Aorta (tissue), 5 donors: ENCODE measurements at regions of chr6 and their contacts with region 1.

Region 1: GRCh38 chr6:29649701-29650673 is 6.9 kb upstream of the MOG start:
- DNase-seq: peak; percentile 99
- ATAC-seq: peak; percentile 97
- H3K4me3 ChIP-seq: peak overlapping the region; percentile 59 to 97
- H3K27ac ChIP-seq: peak overlapping the region; percentile 94 to 100
- H3K4me1 ChIP-seq: no peaks in the 10 kb centered on the region
- H3K27me3 ChIP-seq: no peaks in the 10 kb centered on the region

Region 2: DNA sequence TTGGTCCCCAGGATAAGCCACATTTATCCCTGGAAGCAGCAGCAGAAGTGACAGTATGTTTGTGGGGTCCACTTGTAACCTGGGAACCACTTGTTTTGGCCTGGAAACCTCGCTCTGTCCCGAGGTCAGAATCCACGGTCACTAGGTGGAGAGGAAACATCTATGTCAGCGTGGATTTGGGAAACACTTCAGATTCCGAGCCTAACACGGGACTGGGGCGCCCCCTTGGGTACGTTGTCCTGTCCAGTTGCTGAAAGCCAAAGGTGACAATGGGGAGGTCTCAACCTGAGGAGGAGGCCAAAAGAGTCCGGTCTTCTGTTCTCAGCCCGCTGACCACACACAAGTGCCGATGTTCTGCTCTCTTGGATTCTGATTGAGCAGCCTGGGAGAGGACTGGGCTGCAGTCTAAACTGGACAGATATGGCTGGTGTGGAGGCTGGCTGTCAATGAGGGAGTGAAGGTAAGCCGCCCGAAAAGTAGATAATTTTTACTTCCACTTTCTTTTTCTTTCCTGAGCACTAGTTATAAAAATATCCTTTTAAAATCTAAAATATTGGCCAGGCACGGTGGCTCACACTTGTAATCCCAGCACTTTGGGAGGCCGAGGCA is 35.8 kb after region 1 on chr6:
- intact Hi-C with region 1: loop called in 1 of 2 experiments (anchors 5 kb)
- DNase-seq: peak; percentile 51 to 81
- ATAC-seq: peak; percentile 46
- H3K4me3 ChIP-seq: no peak overlapping the region
- H3K27ac ChIP-seq: no peak overlapping the region
- H3K4me1 ChIP-seq: no peaks in the 10 kb centered on the region
- H3K27me3 ChIP-seq: no peaks in the 10 kb centered on the region

Region 3: GRCh38 chr6:29696155-29697125 is 46.5 kb after region 1 on chr6:
- intact Hi-C with region 1: loop called in 1 of 2 experiments (anchors 5 kb)
- DNase-seq: no peak
- ATAC-seq: no peak
- H3K4me3 ChIP-seq: no peak overlapping the region
- H3K27ac ChIP-seq: no peak overlapping the region
- H3K4me1 ChIP-seq: no peaks in the 10 kb centered on the region
- H3K27me3 ChIP-seq: no peaks in the 10 kb centered on the region

Region 4: DNA sequence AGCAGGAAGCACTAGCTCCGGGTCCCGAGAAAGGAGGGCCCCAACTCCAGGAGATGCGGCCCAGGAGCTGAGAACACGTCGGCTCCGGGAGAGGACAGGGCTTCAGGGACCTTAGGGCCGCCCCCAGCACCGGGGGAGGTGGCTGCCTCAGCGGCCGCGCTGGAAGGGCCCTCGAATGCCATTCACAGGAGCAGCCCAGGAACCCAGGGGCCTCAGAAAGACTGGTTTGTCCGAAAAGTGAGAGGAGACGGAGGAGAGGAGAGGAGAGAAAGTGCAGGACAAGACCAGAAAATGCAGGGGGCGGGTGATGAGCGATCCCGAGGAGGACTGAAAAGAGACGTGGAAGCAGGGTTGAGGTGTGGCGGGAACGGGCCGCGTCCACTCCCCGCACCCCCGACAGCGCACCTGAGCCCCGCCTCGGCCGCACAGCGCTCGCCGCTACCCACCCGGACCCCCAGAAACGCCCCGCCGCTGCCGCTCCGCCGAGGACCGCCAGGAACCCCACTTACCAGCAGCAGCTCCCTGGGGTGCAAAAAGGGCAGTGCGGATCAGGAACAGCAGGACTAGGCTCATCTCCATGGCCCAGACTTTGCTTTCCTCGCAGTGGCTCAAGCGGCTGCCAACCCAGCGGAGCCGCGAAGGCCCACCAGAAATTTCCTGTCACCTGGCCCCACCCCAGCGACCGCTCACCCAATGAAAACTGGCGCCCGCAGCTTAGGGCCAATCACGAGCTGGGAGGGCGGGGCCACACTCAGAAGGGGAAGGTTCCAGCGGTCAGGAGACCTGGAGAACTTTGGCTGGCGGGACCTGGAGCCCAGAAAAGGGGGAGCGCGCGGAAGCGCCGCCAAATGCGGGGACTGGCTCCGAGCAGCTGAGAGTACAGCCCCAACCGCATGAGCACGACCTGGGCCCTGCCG is 98.7 kb after region 1 on chr6:
- intact Hi-C with region 1: loop called in 1 of 2 experiments (anchors 5 kb)
- DNase-seq: peak; percentile 97
- ATAC-seq: peak; percentile 90
- H3K4me3 ChIP-seq: peak overlapping the region; percentile 52
- H3K27ac ChIP-seq: peak overlapping the region in 1 of 2 donors; percentile 74
- H3K4me1 ChIP-seq: no peaks in the 10 kb centered on the region
- H3K27me3 ChIP-seq: no peaks in the 10 kb centered on the region